CD8-positive, alpha-beta memory T cell (primary cell): ENCODE measurements at regions of chr16 and their contacts with region 1.

Region 1: GRCh38 chr16:67883872-67884261 is 818 bp upstream of the NRN1L start:
- DNase-seq: peak; percentile 66 to 80 (median 67)
- H3K4me3 ChIP-seq: no peak overlapping the region
- H3K4me3 Mint-ChIP-seq: no peak overlapping the region
- H3K27ac ChIP-seq: no peak overlapping the region
- H3K27ac Mint-ChIP-seq: peak overlapping the region in 3 of 8 donors; percentile 17 to 82 (median 24)
- H3K4me1 ChIP-seq: no peaks in the 10 kb centered on the region
- H3K4me1 Mint-ChIP-seq: no peaks in the 10 kb centered on the region
- H3K27me3 ChIP-seq: no peaks in the 10 kb centered on the region
- H3K27me3 Mint-ChIP-seq: no peaks in the 10 kb centered on the region

Region 2: DNA sequence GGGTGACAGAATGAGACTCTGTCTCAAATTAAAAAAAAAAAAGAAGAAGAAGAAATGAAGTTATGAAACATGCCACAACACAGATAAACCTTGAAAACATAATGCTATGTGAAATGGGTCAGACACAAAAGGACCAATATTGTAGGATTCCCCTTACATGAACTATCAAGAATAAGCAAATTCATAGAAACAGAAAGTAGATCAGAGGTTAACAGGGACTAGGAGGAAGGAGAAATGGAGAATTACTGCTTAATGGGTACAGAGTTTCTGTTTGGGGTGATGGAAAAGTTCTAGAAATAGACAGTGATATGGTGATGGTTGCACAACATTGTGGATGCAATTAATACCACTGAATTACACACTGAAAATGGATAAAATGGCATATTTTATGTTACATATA is 93.8 kb before region 1 on chr16:
- CTCF ChIA-PET with region 1: no interaction called
- POLR2A ChIA-PET with region 1: no interaction called
- DNase-seq: no peak
- H3K4me3 ChIP-seq: no peak overlapping the region
- H3K4me3 Mint-ChIP-seq: no peak overlapping the region
- H3K27ac ChIP-seq: no peak overlapping the region
- H3K27ac Mint-ChIP-seq: peak overlapping the region in 4 of 8 donors; percentile 20 to 85 (median 52)
- H3K4me1 ChIP-seq: no peaks in the 10 kb centered on the region
- H3K4me1 Mint-ChIP-seq: peaks cover 10 to 20% (median 16%) of the 10 kb centered on the region in 3 donors
- H3K27me3 ChIP-seq: no peaks in the 10 kb centered on the region
- H3K27me3 Mint-ChIP-seq: no peaks in the 10 kb centered on the region

Region 3: DNA sequence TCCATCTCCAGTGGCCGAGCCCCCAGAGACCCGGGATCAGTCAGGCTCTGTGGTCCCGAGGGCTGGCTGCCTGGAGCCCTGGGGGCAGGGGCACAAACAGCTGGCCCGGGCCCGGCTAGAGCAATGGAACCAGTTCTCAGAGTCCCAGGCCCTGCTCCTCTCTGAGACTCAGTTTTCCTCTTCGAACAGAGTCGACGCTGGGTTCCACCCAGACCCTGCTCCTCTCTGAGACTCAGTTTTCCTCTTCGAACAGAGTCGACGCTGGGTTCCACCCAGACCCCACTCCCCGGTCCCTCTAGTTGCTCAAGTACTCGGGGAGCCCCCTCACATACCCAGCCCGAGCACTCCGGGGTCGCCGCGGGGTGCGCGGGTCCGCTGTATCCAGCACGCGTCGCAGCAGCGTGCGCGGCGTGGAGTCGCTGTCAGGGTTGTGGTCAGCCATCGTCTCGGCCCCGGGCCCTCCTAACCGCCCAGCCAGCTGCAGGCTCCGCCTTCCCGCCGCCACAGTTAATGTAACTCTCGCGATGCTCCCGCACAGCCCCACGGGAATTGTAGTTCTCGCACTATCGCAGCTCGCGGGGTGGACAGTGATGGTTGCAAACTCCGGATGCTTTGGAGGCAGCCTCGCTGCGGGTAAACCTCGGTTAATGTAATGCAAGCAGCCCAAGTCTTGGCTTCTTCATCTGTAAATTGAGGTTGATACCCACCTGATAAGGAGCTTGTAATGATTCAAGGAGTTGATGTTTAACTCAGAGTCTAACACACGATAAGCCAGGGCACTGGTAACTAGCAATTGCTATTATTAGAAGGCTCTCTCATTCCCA is 50.2 kb before region 1 on chr16:
- CTCF ChIA-PET with region 1: interaction called, 11 read pairs
- POLR2A ChIA-PET with region 1: no interaction called
- DNase-seq: peak; percentile 87 to 95 (median 88)
- H3K4me3 ChIP-seq: peak overlapping the region; percentile 90
- H3K4me3 Mint-ChIP-seq: peak overlapping the region; percentile 88 to 95 (median 92)
- H3K27ac ChIP-seq: peak overlapping the region; percentile 79
- H3K27ac Mint-ChIP-seq: peak overlapping the region; percentile 37 to 92 (median 86)
- H3K4me1 ChIP-seq: peaks cover 16% of the 10 kb centered on the region
- H3K4me1 Mint-ChIP-seq: peaks cover 13 to 21% (median 19%) of the 10 kb centered on the region in 3 donors
- H3K27me3 ChIP-seq: no peaks in the 10 kb centered on the region
- H3K27me3 Mint-ChIP-seq: peaks cover 0 to 1% of the 10 kb centered on the region in 2 donors

Region 4: DNA sequence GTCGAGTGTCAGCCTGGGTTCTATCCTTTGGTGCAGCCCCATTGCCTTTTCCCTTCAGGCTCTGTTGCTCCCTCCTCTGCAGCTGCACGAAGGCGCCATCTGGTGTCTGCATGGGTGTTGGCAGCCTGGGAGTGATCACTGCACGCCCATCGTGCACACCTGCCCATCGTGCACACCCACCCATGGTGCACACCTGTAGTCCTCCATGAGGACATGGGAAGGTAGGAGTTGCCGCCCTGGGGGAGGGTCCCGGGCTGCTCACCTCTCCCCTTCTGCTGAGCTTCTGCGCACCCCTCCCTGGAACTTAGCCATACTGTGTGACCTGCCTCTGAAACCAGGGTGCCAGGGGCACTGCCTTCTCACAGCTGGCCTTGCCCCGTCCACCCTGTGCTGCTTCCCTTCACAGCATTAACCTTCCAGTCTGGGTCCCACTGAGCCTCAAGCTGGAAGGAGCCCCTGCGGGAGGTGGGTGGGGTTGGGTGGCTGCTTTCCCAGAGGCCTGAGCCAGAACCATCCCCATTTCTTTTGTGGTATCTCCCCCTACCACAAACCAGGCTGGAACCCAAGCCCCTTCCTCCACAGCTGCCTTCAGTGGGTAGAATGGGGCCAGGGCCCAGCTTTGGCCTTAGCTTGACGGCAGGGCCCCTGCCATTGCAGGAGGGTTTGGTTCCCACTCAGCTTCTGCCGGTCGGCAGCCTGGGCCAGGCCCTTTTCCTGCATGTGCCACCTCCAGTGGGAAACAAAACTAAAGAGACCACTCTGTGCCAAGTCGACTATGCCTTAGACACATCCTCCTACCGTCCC is 44.9 kb after region 1 on chr16:
- CTCF ChIA-PET with region 1: interaction called, 17 read pairs
- POLR2A ChIA-PET with region 1: no interaction called
- DNase-seq: peak; percentile 59 to 81 (median 60)
- H3K4me3 ChIP-seq: no peak overlapping the region
- H3K4me3 Mint-ChIP-seq: no peak overlapping the region
- H3K27ac ChIP-seq: no peak overlapping the region
- H3K27ac Mint-ChIP-seq: peak overlapping the region in 4 of 8 donors; percentile 7 to 79 (median 62)
- H3K4me1 ChIP-seq: no peaks in the 10 kb centered on the region
- H3K4me1 Mint-ChIP-seq: peaks cover 0 to 21% (median 4%) of the 10 kb centered on the region in 3 donors
- H3K27me3 ChIP-seq: no peaks in the 10 kb centered on the region
- H3K27me3 Mint-ChIP-seq: no peaks in the 10 kb centered on the region

Region 5: DNA sequence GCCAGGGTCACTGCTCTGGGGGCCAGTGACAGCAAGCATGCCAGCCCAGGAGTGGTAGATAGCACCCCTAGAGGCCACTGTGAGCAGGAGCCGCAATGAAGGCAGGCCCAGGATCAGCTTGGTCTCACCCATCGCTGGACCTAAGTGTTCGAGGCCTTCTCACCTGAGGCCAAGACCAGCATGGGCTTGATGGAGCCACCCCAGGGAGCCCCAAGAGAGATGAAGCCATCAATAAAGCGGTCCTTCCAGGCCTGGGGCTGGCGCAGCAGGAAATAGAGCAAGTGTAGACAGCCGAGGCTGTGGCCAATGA is 58.3 kb after region 1 on chr16:
- CTCF ChIA-PET with region 1: interaction called, 27 read pairs
- POLR2A ChIA-PET with region 1: no interaction called
- DNase-seq: peak in 1 of 5 donors; percentile 22
- H3K4me3 ChIP-seq: no peak overlapping the region
- H3K4me3 Mint-ChIP-seq: no peak overlapping the region
- H3K27ac ChIP-seq: no peak overlapping the region
- H3K27ac Mint-ChIP-seq: peak overlapping the region in 3 of 8 donors; percentile 61 to 86 (median 73)
- H3K4me1 ChIP-seq: peaks cover 34% of the 10 kb centered on the region
- H3K4me1 Mint-ChIP-seq: peaks cover 19 to 32% (median 23%) of the 10 kb centered on the region in 3 donors
- H3K27me3 ChIP-seq: no peaks in the 10 kb centered on the region
- H3K27me3 Mint-ChIP-seq: no peaks in the 10 kb centered on the region

Region 6: GRCh38 chr16:68064791-68065365 is 181.0 kb after region 1 on chr16:
- CTCF ChIA-PET with region 1: interaction called, 12 read pairs
- POLR2A ChIA-PET with region 1: no interaction called
- DNase-seq: peak; percentile 56 to 78 (median 62)
- H3K4me3 ChIP-seq: no peak overlapping the region
- H3K4me3 Mint-ChIP-seq: peak overlapping the region; percentile 1 to 88 (median 63)
- H3K27ac ChIP-seq: peak overlapping the region; percentile 12
- H3K27ac Mint-ChIP-seq: peak overlapping the region; percentile 70 to 93 (median 88)
- H3K4me1 ChIP-seq: peaks cover 82% of the 10 kb centered on the region
- H3K4me1 Mint-ChIP-seq: peaks cover 74 to 89% (median 87%) of the 10 kb centered on the region in 3 donors
- H3K27me3 ChIP-seq: no peaks in the 10 kb centered on the region
- H3K27me3 Mint-ChIP-seq: no peaks in the 10 kb centered on the region